Activated CD4-positive, alpha-beta T cell treated with anti-CD3 and anti-CD28 coated beads, Interleukin-2, amount 10 ng/mL, durations not matched to agents 24 days and 14 days (primary cell): ENCODE measurements at regions of chr3 and their contacts with region 1.

Region 1: GRCh38 chr3:25007974-25008658 is 419.9 kb upstream of the RARB start:
- DNase-seq: no peak
- H3K4me3 Mint-ChIP-seq: no peak overlapping the region
- H3K27ac Mint-ChIP-seq: no peak overlapping the region
- H3K4me1 Mint-ChIP-seq: no peaks in the 10 kb centered on the region
- H3K27me3 Mint-ChIP-seq: no peaks in the 10 kb centered on the region

Region 2: DNA sequence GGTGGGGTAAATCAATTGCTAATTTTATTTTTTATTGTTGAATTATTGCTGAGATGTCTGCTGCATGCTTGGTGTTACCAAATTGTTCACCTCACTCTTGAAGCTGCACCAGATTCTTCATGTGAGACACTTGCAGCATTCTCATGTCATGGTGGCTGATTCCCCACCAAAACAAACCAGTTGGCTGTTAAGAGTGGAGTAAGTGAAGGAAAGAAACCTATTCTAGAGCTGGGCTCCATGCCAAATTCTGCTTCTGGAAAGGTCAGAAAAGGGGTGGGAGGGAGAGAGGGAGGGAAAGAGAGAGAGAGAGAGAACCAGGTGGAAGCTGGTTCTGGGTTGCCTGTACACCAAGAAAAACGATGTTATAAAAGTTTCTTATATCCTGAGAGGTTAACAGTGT is 196.0 kb before region 1 on chr3:
- intact Hi-C with region 1: no loop called
- DNase-seq: no peak
- H3K4me3 Mint-ChIP-seq: no peak overlapping the region
- H3K27ac Mint-ChIP-seq: no peak overlapping the region
- H3K4me1 Mint-ChIP-seq: no peaks in the 10 kb centered on the region
- H3K27me3 Mint-ChIP-seq: no peaks in the 10 kb centered on the region

Region 3: DNA sequence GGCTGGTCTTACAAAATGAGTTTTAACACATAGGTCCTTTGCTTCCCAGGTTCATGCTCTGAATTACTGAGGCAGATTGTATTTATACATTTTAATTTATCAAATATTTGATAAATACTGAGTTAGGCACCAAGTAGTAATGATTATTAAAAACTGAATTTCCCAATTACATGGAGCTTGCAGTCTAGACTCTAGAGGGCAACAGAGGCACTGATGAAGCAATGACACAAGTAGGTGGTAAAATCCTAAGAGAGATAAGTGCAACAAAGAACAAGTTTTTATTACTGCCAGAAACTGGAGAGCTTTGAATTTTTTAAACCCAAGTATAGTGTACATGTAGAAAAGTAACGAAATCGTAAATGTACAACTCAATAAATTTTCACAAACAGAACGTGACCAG is 13.7 kb after region 1 on chr3:
- intact Hi-C with region 1: no loop called
- DNase-seq: no peak
- H3K4me3 Mint-ChIP-seq: no peak overlapping the region
- H3K27ac Mint-ChIP-seq: no peak overlapping the region
- H3K4me1 Mint-ChIP-seq: no peaks in the 10 kb centered on the region
- H3K27me3 Mint-ChIP-seq: no peaks in the 10 kb centered on the region

Region 4: DNA sequence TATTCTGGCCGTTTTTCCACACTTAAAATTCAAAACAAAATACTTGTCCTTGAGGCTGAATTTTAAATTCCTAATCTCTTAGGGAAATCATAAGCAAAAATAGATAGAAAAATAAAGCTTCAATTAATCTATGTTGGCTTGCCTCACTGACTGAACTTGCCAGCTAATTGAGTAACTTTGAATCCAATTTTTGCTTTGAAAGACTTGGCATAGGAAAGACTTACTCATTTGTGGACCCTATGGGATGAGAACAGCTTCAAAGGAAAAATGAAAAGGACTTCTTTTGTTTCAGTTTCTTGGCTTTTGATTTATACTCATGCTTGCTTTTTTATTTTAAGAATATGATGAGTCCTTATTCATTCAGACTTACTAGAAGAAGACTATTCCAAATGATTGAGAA is 49.3 kb after region 1 on chr3:
- intact Hi-C with region 1: loop called (anchors 2 kb)
- DNase-seq: no peak
- H3K4me3 Mint-ChIP-seq: no peak overlapping the region
- H3K27ac Mint-ChIP-seq: no peak overlapping the region
- H3K4me1 Mint-ChIP-seq: no peaks in the 10 kb centered on the region
- H3K27me3 Mint-ChIP-seq: no peaks in the 10 kb centered on the region